Spleen (tissue), 13 donors: ENCODE measurements at regions of chr12 and their contacts with region 1.

Region 1: DNA sequence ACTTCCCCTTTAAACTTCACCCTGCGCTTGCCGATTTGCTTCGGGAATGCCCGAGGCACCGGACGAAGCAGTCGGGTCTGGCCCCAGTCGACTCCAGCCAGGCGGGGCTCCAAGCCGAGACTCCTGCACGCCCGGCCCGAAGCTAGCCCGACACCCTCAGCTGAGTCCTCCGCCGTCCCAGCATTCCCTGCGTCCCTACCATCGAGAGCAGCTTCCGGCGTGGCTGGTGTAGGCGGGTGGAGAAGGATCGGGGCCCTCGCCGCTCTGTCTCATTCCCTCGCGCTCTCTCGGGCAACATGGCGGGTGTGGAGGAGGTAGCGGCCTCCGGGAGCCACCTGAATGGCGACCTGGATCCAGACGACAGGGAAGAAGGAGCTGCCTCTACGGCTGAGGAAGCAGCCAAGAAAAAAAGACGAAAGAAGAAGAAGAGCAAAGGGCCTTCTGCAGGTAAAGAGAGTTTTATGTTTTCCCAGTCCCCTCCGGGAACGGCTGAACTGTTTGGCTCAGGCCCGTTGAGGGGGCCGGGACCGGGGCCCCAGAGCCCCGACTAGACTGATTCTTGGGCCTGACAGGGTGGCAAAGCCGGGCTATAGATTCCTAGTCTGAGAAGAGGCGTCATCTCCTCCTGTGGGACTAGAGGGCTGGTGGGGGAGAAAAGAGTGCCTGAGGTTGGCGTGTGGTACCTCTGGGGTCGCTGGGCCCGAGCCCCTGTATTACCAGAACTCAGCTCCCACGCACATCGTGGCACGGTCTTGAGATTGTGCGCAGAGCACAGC is at the start of gene METAP2:
- DNase-seq: peak; percentile 98
- H3K4me3 ChIP-seq: peak within 1 kb of the TSS; percentile 65 to 93 (median 80)
- H3K27ac ChIP-seq: peak within 1 kb of the TSS; percentile 81 to 94 (median 92)
- H3K4me1 ChIP-seq: peaks cover 17 to 57% (median 38%) of the 10 kb centered on the region in 6 donors
- H3K27me3 ChIP-seq: no peaks in the 10 kb centered on the region
- CTCF ChIP-seq: no peak
- POLR2A ChIP-seq: peak in 2 of 3 donors; percentile 69 to 90
- total RNA-seq, gene METAP2: 35.1 to 69.2 (median 48.3) TPM

Region 2: DNA sequence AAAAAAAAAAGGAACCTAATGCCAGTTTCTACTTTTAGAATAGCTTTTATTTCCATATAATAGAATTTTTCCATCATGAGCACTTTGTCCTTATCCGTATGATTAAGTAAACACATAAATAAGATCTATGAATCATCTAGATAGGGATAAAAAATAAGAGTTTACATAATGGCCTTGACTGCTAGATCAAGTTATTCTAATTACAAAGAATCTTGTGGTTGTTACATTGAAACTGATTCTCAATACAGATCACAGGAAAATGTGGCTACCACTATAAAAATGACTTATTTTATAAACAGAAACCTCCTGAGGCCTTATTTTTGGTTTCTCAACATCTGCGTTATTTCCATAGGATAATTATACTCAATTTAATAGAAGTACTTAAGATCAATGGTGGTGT is 436.2 kb before region 1 on chr12:
- intact Hi-C with region 1: no loop called
- DNase-seq: no peak
- H3K4me3 ChIP-seq: no peak overlapping the region
- H3K27ac ChIP-seq: no peak overlapping the region
- H3K4me1 ChIP-seq: peaks cover 0 to 11% (median 3%) of the 10 kb centered on the region in 6 donors
- H3K27me3 ChIP-seq: no peaks in the 10 kb centered on the region
- CTCF ChIP-seq: no peak
- POLR2A ChIP-seq: no peak

Region 3: DNA sequence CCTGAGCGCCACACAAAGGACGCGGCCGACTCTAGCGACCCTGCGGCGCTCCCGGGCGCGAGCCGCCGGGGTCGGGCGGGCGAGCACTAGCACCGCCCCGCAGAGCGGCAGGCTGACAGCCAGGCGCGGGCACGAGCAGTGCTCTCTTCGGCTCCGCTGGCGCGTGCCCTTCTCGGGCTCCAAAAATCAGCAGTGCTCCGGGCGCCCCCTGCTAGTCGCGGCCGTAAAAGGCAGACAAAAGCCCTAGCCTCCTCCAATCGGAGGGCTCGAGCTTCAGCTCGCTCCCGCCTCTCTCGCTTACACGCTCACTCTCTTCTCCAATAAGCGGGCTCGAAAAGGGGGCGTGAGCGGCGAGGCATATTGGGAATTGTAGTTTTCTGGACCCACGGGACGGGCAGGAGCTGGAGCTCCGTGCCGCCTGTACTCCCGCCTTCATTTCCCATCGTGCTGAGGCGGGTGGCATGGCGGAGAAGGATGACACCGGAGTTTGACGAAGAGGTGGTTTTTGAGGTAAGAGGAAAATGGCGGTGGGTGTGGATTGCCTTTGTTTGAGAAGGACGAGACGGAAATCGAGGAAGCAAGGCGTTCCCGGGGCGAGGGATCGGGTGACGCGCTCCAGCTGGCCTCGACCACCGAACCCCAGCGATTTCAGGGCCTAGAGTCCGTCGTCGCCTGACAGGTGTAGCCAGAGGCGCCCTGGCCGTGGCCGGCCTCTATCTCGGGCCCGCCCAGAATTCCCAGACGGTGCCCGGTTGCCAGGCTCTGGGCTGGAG is 256.5 kb before region 1 on chr12 and contains the starts of genes FGD6 and VEZT:
- intact Hi-C with region 1: loop called (anchors 10 kb)
- DNase-seq: peak; percentile 100
- H3K4me3 ChIP-seq: peak within 1 kb of the TSS; percentile 78 to 94 (median 90)
- H3K27ac ChIP-seq: peak within 1 kb of the TSS; percentile 83 to 95 (median 93)
- H3K4me1 ChIP-seq: peaks cover 0 to 59% (median 29%) of the 10 kb centered on the region in 6 donors
- H3K27me3 ChIP-seq: no peaks in the 10 kb centered on the region
- CTCF ChIP-seq: peak; percentile 22 to 91 (median 70)
- POLR2A ChIP-seq: peak in 1 of 3 donors; percentile 24
- total RNA-seq, gene FGD6: 8.5 to 13.0 (median 10.8) TPM
- total RNA-seq, gene VEZT: 38.6 to 64.3 (median 48.7) TPM

Region 4: GRCh38 chr12:95304673-95305198 is 169.3 kb before region 1 on chr12:
- intact Hi-C with region 1: no loop called
- DNase-seq: no peak
- H3K4me3 ChIP-seq: no peak overlapping the region
- H3K27ac ChIP-seq: no peak overlapping the region
- H3K4me1 ChIP-seq: no peaks in the 10 kb centered on the region
- H3K27me3 ChIP-seq: no peaks in the 10 kb centered on the region
- CTCF ChIP-seq: no peak
- POLR2A ChIP-seq: no peak